ENCODE measurements at regions of chr9 and their contacts with region 1.

Region 1: DNA sequence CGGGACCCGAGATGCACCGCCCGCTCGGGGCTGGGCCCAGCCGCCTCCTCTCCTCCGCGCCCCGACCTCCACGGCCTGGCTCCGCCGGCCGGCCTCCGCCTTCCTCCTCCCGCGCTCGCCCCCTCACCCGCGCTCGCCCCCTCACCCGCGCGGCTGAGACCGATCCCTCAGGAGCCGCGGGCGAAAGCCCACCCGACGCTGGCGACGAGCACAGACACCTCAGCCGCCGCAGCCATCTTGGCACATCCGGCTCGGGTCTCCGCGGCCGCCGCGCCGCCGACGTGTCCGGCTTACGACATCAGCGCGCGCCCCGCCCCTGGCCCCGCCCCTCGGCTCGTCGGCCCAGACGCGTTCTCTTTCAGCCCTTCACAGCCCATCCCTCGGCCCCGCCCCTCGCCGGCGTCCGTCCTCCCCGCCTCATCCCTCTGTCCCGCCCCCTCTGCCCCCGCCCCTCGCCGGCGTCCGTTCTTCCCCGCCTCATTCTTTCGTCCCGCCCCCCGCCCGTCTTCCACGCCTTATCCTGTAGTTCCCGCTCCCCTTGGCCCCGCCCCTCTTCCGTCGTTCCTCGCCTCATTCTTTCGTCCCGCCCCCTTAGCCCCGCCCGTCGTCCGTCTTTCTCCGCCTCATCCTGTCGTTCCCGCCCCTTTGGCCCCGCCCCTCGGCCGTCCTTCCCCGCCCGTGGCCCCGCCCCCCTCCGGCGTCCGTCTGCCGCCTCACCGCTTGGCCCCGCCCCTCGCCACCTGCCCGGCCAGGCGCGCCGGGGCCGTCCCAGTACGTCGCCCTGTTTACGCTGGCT is at the start of gene SEC16A:
- DNase-seq: peak; percentile 80 to 99
- H3K4me3 ChIP-seq: peak within 1 kb of the TSS; percentile 96
- H3K27ac ChIP-seq: peak within 1 kb of the TSS; percentile 97
- H3K4me1 ChIP-seq: peaks cover 15% of the 10 kb centered on the region
- H3K27me3 ChIP-seq: no peaks in the 10 kb centered on the region
- CTCF ChIP-seq: no peak
- total RNA-seq, gene SEC16A: 81.8 and 90.1 TPM in 2 replicates

Region 2: DNA sequence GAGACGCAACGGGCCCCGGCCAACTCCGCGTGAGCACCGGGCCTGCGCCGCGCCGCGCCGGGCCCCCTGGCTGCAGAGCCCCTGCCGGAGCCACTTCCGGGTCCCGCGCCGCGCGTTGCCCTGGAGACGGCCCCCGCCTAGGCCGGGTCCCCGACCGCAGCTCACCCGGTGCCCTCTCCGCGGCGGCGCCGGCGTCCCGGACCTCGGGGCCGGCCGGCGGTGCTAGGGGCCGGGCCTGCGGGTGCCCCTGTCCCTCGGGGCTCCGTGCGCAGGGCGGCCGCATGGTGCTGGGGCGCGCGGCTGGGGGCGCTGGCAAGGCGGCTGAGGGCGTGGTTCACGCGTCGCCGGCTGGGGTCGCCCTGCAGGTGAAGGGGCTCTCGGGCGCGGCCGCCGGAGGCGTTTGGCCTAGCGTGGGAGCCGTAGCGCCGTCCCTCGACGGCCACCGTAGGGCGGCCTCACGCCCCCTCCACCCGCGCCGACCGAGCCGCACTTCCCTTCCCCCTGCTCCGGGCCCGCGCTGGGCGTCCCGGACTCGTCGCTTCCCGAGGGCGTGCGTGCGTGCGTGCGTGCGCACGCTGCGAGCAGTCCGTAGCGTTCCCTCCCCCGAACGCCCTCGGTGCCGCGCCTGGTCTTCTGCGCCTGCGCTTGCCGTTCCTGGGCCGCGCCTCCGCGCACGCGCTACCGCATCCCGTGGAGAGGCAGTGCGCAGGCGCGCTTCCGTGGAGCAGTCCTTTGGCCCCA is 364.5 kb before region 1 on chr9 and contains the start of gene TMEM250:
- CTCF ChIA-PET with region 1: no interaction called
- POLR2A ChIA-PET with region 1: interaction called, 4 read pairs
- intact Hi-C with region 1: loop called (anchors 5 kb)
- DNase-seq: peak; percentile 84 to 98
- H3K4me3 ChIP-seq: peak within 1 kb of the TSS; percentile 93
- H3K27ac ChIP-seq: peak within 1 kb of the TSS; percentile 49
- H3K4me1 ChIP-seq: 0 out of 2 replicates have a peak, but pooled peaks cover 12% of the 10 kb centered on the region
- H3K27me3 ChIP-seq: no peaks in the 10 kb centered on the region
- CTCF ChIP-seq: no peak
- total RNA-seq, gene TMEM250: 73.8 and 75.3 TPM in 2 replicates

Region 3: GRCh38 chr9:136424750-136425362 is 58.1 kb before region 1 on chr9:
- CTCF ChIA-PET with region 1: no interaction called
- POLR2A ChIA-PET with region 1: no interaction called
- intact Hi-C with region 1: no loop called
- DNase-seq: no peak
- H3K4me3 ChIP-seq: no peak overlapping the region
- H3K27ac ChIP-seq: no peak overlapping the region
- H3K4me1 ChIP-seq: no peaks in the 10 kb centered on the region
- H3K27me3 ChIP-seq: no peaks in the 10 kb centered on the region
- CTCF ChIP-seq: no peak

Region 4: DNA sequence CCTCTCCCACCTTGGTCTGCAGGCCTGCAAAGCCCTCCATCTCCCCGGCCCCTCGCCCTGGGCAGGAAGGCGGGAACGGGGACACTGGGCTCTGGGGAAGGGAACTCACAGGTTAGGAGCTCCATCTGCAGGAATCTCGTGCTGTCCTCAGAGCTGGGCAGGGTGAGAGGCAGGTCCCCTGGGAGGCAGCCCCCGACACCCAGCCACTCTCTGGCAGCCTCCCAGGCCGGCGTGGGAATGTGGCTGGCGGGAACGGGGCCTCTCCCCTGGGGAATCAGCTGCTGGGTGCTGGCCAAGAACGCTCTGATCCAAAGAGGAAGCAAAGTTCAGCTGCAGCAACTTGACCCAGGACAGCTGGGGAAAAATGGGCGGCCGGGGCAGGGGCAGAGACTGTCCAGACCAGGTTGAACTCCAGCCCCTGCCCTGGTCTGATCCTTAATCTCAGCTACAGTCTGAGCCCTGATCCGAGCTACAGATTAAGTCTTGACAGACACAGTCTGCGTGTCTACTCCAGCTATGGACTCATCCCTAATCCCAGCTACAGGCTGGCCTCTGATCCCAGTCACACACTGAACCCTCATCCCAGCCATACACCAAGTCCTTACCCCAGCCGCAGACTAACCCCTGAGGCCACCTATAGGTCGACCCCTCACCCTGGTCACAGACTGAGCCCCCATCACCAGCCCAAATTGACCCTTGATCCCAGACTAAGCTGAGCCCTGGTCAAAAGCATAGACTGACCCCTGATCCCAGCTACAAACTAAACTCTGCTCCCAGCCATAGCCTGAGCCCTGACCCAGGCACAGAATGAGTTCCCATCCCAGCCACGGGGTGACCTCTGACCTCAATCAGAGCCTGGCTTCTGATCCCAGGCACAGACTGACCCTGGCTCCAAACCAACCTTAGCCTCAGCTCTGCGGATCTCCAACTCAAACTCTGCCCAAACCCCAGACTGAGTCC is 142.4 kb after region 1 on chr9:
- CTCF ChIA-PET with region 1: interaction called, 38 read pairs
- POLR2A ChIA-PET with region 1: interaction called, 5 read pairs
- intact Hi-C with region 1: loop called (anchors 1 kb)
- DNase-seq: peak in 1 of 2 experiments; percentile 75
- H3K4me3 ChIP-seq: no peak overlapping the region
- H3K27ac ChIP-seq: no peak overlapping the region
- H3K4me1 ChIP-seq: no peaks in the 10 kb centered on the region
- H3K27me3 ChIP-seq: no peaks in the 10 kb centered on the region
- CTCF ChIP-seq: peak; percentile 35; the same call in 1 of the 2 replicates

Region 5: DNA sequence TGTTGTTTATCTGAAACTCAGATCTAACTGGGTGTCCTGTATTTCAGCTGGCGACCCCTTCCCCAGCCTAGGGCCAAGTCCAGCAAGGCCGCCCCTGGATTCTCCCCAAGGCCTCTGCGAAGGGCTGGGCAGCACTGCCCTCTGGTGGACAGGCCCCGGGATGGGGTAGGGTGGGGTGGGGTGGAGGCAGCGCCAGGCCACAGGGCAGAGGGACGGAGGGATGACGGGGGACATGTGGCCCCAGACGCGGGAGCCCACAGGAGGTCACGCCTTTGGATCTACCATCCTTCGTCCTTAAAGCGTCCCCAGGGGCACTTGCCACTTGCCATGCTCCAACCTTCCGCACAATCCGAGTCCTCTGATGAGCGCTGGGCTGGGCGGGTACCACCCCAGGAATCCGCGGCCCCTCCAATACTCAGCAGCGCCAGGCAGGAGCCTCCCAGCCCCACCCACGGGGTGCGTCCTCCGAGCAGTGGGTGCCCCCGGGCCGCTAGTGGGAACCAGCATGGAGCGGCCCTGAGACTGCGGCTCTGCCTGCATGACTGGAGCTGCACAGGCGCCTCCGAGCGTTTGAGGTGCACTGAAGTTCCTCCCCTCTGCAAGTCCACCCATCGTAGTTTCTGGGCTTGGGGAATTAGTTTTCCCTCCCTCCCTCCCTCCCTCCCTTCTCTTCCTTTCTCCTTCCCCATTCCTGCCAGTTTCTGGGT is 211.4 kb after region 1 on chr9:
- CTCF ChIA-PET with region 1: no interaction called
- POLR2A ChIA-PET with region 1: interaction called, 5 read pairs
- intact Hi-C with region 1: loop called (anchors 2 kb)
- DNase-seq: peak in 1 of 2 experiments; percentile 82
- H3K4me3 ChIP-seq: peak overlapping the region; percentile 43; the same call in 1 of the 2 replicates
- H3K27ac ChIP-seq: peak overlapping the region; percentile 94
- H3K4me1 ChIP-seq: peaks cover 47% of the 10 kb centered on the region
- H3K27me3 ChIP-seq: no peaks in the 10 kb centered on the region
- CTCF ChIP-seq: peak; percentile 91